HEK293T (cell line): ENCODE measurements at regions of chrX and their contacts with region 1.

Region 1: GRCh38 chrX:100413229-100413628 is 3.2 kb upstream of the PCDH19 start:
- DNase-seq: peak; percentile 66

Region 2: DNA sequence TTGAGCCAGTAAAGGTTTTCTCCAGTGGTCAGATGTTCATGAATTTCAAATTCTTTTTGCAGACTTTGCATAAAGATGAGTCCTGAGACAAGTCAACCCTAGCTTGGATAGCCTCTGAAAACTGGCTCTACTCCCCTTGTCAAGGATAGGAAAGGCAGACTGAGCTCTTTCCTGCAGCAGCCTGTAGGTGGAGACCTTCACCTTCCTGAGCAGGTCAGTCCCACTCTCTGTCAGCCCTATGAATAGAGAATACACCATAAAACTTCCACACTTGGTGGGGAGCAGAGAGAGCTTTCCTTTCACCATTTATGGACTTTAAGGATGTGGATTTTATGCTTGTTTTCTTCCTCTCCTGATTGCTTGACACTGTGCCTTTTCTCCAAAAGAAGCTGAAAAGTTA is 45.1 kb before region 1 on chrX:
- CTCF ChIA-PET with region 1: interaction called, 79 read pairs
- POLR2A ChIA-PET with region 1: interaction called, 5 read pairs
- DNase-seq: peak; percentile 61

Region 3: GRCh38 chrX:100424012-100424411 is 10.8 kb after region 1 on chrX:
- CTCF ChIA-PET with region 1: interaction called, 19 read pairs
- POLR2A ChIA-PET with region 1: no interaction called
- DNase-seq: peak; percentile 62

Region 4: DNA sequence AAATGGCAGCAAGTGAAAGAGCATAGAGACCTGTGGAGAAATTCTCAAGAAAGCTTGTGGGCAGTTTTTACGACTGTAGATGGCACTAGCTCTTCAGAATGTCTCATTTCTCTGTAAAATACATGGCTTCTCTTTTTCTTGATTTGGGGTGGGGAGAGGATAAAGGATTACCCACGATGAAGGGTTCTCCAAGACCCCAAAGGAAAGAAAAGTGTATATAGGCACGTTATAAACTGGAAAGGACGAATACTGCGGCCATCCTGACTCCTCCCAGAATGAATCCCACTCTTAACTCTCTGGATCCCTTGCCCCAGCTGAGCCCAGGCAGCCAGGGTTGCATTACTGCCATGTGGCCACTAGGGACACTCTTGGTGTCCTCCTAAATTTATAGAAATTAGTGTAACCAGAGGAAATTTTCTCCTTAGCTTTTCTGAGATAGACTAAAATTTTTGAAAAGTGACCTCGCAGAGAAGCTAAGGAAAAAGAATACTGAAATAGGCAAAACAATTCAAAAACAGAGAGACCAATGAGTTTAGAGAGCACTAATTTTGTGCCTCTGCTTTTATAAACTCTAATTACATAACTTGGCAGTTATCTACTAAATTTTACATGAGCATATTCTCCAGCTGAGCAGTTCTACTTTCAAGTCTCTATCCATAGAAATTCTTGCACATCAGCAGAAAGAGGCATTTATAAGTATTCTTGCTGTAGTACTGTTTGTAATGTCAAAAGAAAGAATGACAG is 34.6 kb after region 1 on chrX:
- CTCF ChIA-PET with region 1: interaction called, 12 read pairs
- POLR2A ChIA-PET with region 1: no interaction called
- DNase-seq: peak; percentile 88

Region 5: GRCh38 chrX:100477958-100478357 is 64.7 kb after region 1 on chrX:
- CTCF ChIA-PET with region 1: no interaction called
- POLR2A ChIA-PET with region 1: no interaction called
- DNase-seq: no peak